ENCODE measurements at regions of chr1 and their contacts with region 1.

Region 1: DNA sequence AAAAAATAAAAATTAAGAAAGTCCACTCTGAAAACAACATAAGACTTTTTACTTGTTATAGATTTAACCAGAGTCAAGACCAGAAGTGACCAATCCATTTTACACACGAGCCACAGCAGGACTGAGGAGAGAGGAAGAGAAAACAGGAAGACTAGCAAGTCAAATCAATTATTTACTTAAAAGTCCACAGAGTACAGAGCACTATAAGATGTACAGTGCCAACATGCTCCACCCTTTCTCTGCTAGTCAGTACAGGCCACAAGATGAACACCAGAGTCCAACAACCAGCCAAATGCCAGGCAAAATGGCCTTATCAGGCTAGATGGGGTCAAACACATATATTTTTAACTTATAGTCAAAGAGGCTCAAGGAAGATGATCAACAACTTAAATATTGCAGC is 19.5 kb downstream of the LUZP1 start:
- DNase-seq: no peak
- H3K4me3 Mint-ChIP-seq: no peak overlapping the region
- H3K27ac Mint-ChIP-seq: peak overlapping the region; percentile 13
- H3K4me1 Mint-ChIP-seq: peaks cover 29% of the 10 kb centered on the region
- H3K27me3 Mint-ChIP-seq: no peaks in the 10 kb centered on the region

Region 2: GRCh38 chr1:23108918-23109533 is 40.1 kb before region 1 on chr1:
- intact Hi-C with region 1: loop called (anchors 2 kb)
- DNase-seq: no peak
- H3K4me3 Mint-ChIP-seq: no peak overlapping the region
- H3K27ac Mint-ChIP-seq: peak overlapping the region; percentile 3
- H3K4me1 Mint-ChIP-seq: peaks cover 54% of the 10 kb centered on the region
- H3K27me3 Mint-ChIP-seq: no peaks in the 10 kb centered on the region

Region 3: GRCh38 chr1:23168457-23169194 is 19.5 kb after region 1 on chr1 and contains the start of gene LUZP1:
- intact Hi-C with region 1: loop called (anchors 2 kb)
- DNase-seq: peak; percentile 77
- H3K4me3 Mint-ChIP-seq: peak within 1 kb of the TSS; percentile 98
- H3K27ac Mint-ChIP-seq: peak within 1 kb of the TSS; percentile 85
- H3K4me1 Mint-ChIP-seq: peaks cover 22% of the 10 kb centered on the region
- H3K27me3 Mint-ChIP-seq: peaks cover 2% of the 10 kb centered on the region
- total RNA-seq, gene LUZP1: 19.7 and 21.6 TPM in 2 replicates

Measured in activated T-helper 2 cell treated with anti-CD3 and anti-CD28 coated beads, Interferon-gamma antibody, Interleukin-2, Interleukin-4, amounts not matched to agents 10 μg/mL and 5 μg/mL and 100 μg/mL, durations not matched to agents 14 hours and 24 hours and 36 hours (primary cell).